K562 (cell line): ENCODE measurements at regions of chr9 and their contacts with region 1.

Region 1: GRCh38 chr9:37465249-37466036 is at the start of gene ZBTB5:
- DNase-seq: peak; percentile 99 to 100 (median 100)
- ATAC-seq: peak; percentile 89
- H3K4me3 ChIP-seq: peak within 1 kb of the TSS; percentile 65
- H3K27ac ChIP-seq: peak within 1 kb of the TSS; percentile 95
- H3K4me1 ChIP-seq: peaks cover 16 to 28% of the 10 kb centered on the region in 2 experiments
- H3K27me3 ChIP-seq: no peaks in the 10 kb centered on the region
- CTCF ChIP-seq: 0 out of 6 replicates have a peak, but pooled peaks of 1 of the 3 experiments have one; percentile 5
- EP300 ChIP-seq: peak; percentile 22; the same call in 1 of the 2 replicates
- POLR2A ChIP-seq: peak; percentile 96
- RAD21 ChIP-seq: no peak
- polyA plus RNA-seq, gene ZBTB5: 2.3 to 4.7 TPM

Region 2: GRCh38 chr9:37441776-37442370 is 23.6 kb before region 1 on chr9:
- CTCF ChIA-PET with region 1: no interaction called
- POLR2A ChIA-PET with region 1: interaction called, 13 read pairs
- in situ Hi-C with region 1: no loop called
- intact Hi-C with region 1: no loop called
- DNase-seq: peak in 1 of 4 experiments; percentile 11
- ATAC-seq: no peak
- H3K4me3 ChIP-seq: no peak overlapping the region
- H3K27ac ChIP-seq: no peak overlapping the region
- H3K4me1 ChIP-seq: no peaks in the 10 kb centered on the region
- H3K27me3 ChIP-seq: no peaks in the 10 kb centered on the region
- CTCF ChIP-seq: no peak
- EP300 ChIP-seq: no peak
- POLR2A ChIP-seq: no peak
- RAD21 ChIP-seq: no peak

Region 3: GRCh38 chr9:37449862-37450632 is 15.4 kb before region 1 on chr9:
- CTCF ChIA-PET with region 1: no interaction called
- POLR2A ChIA-PET with region 1: interaction called, 65 read pairs
- in situ Hi-C with region 1: no loop called
- intact Hi-C with region 1: no loop called
- DNase-seq: no peak
- ATAC-seq: no peak
- H3K4me3 ChIP-seq: no peak overlapping the region
- H3K27ac ChIP-seq: no peak overlapping the region
- H3K4me1 ChIP-seq: peaks cover 0 to 6% of the 10 kb centered on the region in 2 experiments; a peak in 1 of 5 replicates
- H3K27me3 ChIP-seq: no peaks in the 10 kb centered on the region
- CTCF ChIP-seq: no peak
- EP300 ChIP-seq: no peak
- POLR2A ChIP-seq: no peak
- RAD21 ChIP-seq: no peak

Region 4: GRCh38 chr9:37575921-37576721 is 110.7 kb after region 1 on chr9 and contains the start of gene FBXO10:
- CTCF ChIA-PET with region 1: no interaction called
- POLR2A ChIA-PET with region 1: no interaction called
- in situ Hi-C with region 1: no loop called
- intact Hi-C with region 1: no loop called
- DNase-seq: peak in 2 of 4 experiments; percentile 33 to 39
- ATAC-seq: no peak
- H3K4me3 ChIP-seq: no peak within 1 kb of the TSS
- H3K27ac ChIP-seq: no peak within 1 kb of the TSS
- H3K4me1 ChIP-seq: no peaks in the 10 kb centered on the region
- H3K27me3 ChIP-seq: no peaks in the 10 kb centered on the region
- CTCF ChIP-seq: no peak
- EP300 ChIP-seq: no peak
- POLR2A ChIP-seq: no peak
- RAD21 ChIP-seq: no peak
- polyA plus RNA-seq, gene FBXO10: 0.84 to 1.4 TPM

Region 5: GRCh38 chr9:37592108-37592951 is 126.9 kb after region 1 on chr9 and contains the start of gene TOMM5:
- CTCF ChIA-PET with region 1: no interaction called
- POLR2A ChIA-PET with region 1: no interaction called
- in situ Hi-C with region 1: no loop called
- intact Hi-C with region 1: loop called (anchors 1 kb)
- DNase-seq: peak; percentile 88 to 97 (median 90)
- ATAC-seq: peak; percentile 92
- H3K4me3 ChIP-seq: peak within 1 kb of the TSS; percentile 57
- H3K27ac ChIP-seq: peak within 1 kb of the TSS; percentile 87
- H3K4me1 ChIP-seq: peaks cover 20 to 31% of the 10 kb centered on the region in 2 experiments
- H3K27me3 ChIP-seq: no peaks in the 10 kb centered on the region
- CTCF ChIP-seq: no peak; a peak in 1 of 6 replicates
- EP300 ChIP-seq: peak; percentile 52
- POLR2A ChIP-seq: peak; percentile 99
- RAD21 ChIP-seq: no peak
- polyA plus RNA-seq, gene TOMM5: 1,739 to 1,742 TPM

Region 6: DNA sequence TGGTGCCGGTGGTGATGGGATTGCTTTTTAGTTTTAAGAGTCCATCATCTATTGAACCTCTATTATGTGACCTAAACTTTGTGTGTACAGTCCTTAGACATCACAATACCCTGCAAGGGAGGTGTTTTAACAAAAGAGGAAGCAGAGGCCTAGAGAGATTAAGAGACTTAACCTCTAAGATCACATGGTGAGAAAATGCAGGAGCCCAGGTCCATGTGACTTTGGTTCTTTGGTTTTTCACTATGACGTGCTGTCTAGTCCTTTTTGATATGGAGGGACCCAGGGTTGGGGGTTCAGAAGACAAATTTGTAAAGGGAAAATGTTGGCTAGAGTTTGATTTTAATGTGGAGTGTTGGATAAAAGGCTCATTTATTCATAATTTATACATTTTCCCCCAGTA is 254.1 kb after region 1 on chr9:
- CTCF ChIA-PET with region 1: no interaction called
- POLR2A ChIA-PET with region 1: no interaction called
- in situ Hi-C with region 1: no loop called
- intact Hi-C with region 1: no loop called
- DNase-seq: no peak
- ATAC-seq: peak; percentile 33; the same call in 1 of the 3 replicates
- H3K4me3 ChIP-seq: no peak overlapping the region
- H3K27ac ChIP-seq: no peak overlapping the region
- H3K4me1 ChIP-seq: no peaks in the 10 kb centered on the region
- H3K27me3 ChIP-seq: peaks cover 28 to 33% of the 10 kb centered on the region in 2 experiments
- CTCF ChIP-seq: no peak
- EP300 ChIP-seq: no peak
- POLR2A ChIP-seq: no peak
- RAD21 ChIP-seq: no peak